ENCODE measurements at regions of chr7 and their contacts with region 1.

Region 1: DNA sequence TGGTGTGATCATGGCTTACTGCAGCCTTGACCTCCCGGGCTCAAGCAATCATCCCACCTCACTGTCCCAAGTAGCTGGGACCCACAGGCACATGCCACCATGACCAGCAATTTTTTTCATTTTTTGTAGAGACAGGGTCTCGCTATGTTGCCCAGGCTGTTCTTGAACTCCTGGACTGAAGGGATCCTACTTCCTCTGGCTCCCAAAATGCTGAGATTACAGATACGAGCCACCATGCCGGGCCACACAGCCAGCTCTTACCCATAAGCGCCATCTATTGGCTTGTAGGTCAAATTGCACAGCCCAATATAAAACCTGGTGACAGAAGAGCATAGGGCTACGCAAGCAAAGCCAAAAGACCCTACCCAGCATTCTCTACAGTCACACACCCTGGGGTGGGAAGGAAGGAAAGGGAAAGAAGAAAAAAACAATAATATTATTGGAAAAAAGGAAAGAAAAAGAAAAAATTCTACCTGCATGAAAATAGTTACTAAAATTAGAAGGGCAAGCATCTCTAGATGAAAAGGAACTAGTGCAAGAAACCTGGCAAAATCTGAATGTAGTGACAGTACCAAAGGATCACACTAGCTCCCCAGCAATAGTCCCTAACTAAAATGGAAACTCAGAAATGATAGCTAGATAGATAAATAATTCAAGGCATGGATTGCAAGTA is 29.4 kb upstream of the AMPH start:
- ATAC-seq: peak in 3 of 8 experiments; percentile 83 to 90 (median 86)
- H3K4me3 ChIP-seq: no peak overlapping the region
- H3K27ac ChIP-seq: no peak overlapping the region
- H3K4me1 ChIP-seq: no peaks in the 10 kb centered on the region

Region 2: DNA sequence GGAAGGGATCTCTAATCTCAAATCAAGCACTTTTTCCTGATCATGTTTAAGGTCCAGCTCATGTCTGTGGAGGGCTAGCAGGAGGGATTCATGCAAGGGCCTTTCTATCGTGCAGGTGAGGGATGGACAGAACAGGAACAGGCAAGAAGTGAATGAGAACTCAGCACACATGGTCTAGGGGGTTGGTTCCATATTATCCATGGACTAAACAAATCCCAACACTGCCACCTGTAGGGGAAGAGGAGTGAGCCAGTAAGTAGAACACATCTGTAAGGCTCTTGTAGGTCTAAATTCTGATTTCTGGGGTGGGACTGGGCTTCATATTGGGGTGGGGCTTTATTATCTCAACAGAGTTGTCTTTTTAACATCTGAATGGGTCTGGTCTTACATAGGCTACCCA is 249.2 kb before region 1 on chr7:
- in situ Hi-C with region 1: loop called in 1 of 9 experiments (anchors 25 kb)
- ATAC-seq: peak in 3 of 8 experiments; percentile 51 to 78 (median 51)
- H3K4me3 ChIP-seq: no peak overlapping the region
- H3K27ac ChIP-seq: no peak overlapping the region
- H3K4me1 ChIP-seq: no peaks in the 10 kb centered on the region

Region 3: DNA sequence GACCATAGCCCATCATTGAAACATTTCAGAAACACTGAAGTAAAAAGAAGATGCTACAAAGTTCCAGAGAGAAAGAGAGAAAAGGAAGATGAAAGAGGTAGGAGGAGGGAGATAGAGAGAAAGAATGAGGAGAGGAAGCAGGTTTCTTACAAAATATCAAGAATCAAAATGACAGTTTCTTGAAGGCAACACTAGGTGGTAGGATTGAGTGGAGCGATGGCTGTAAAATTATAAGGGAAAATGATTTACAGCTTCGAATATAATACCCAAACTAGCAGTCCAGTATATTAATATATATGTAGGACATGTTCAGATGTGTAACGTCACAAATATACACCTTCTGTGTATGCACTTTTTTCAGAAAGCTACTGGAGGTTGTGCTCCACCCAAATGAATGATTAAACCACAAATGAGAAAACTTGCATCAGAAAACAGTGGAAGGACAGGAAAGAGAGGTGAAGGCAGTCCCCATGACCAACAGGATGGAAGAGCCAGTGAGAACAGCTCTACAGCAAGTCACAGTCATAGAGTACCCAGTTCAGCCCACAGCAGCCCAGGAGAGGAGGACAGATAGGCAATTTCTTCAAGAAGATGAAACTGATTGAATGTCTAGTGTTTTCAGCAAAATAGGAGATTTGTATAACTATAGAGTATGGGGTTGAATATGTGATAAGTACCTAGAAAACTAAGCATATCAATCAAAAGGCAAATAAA is 235.7 kb before region 1 on chr7:
- in situ Hi-C with region 1: loop called in 2 of 9 experiments (anchors 25 kb)
- ATAC-seq: no peak
- H3K4me3 ChIP-seq: no peak overlapping the region
- H3K27ac ChIP-seq: no peak overlapping the region
- H3K4me1 ChIP-seq: no peaks in the 10 kb centered on the region

Region 4: DNA sequence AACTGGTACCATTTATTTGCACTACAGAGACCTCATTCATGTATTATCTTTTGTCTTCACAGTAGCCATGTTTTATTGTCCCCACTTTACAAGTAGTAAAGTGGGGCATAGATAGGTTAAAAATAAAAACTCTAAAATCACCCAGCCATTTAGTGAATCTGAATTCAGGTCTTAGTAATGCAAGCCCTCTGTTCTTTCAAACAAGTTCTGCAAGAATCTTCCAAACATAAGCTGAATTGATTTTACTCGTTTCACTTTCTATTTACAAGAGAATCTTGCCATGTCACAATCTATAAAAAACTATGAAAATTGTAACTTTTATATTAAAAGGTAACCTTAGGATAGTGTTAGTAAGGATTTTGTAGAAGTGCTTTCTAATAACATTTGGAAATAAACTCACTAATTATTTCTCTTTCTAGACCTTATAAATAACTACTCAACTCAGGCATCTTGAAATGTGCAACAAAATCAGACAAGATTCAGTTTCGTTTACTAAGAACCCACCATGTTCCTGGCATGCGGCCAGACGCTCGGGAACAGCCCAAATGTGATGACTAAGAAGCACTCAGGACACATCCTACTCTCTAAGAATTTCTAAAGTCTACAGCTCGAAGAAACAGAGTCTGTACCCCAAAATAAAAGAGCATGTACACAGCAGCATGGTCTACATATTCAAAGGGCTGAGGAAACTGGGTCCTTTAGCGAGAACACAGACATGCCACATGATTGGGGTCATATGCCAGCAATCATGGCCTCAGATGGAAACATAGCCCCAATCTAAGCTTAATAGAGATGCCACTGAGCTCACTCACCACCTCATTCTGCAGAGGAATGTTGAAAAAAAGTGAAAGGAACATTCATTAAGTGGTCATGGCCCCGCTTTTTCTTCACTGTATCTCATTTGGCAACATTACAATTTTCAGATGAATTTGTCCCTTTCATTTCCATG is 197.0 kb before region 1 on chr7:
- in situ Hi-C with region 1: loop called in 1 of 9 experiments (anchors 25 kb)
- ATAC-seq: peak in 2 of 8 experiments; percentile 66 to 89
- H3K4me3 ChIP-seq: no peak overlapping the region
- H3K27ac ChIP-seq: no peak overlapping the region
- H3K4me1 ChIP-seq: no peaks in the 10 kb centered on the region

Region 5: DNA sequence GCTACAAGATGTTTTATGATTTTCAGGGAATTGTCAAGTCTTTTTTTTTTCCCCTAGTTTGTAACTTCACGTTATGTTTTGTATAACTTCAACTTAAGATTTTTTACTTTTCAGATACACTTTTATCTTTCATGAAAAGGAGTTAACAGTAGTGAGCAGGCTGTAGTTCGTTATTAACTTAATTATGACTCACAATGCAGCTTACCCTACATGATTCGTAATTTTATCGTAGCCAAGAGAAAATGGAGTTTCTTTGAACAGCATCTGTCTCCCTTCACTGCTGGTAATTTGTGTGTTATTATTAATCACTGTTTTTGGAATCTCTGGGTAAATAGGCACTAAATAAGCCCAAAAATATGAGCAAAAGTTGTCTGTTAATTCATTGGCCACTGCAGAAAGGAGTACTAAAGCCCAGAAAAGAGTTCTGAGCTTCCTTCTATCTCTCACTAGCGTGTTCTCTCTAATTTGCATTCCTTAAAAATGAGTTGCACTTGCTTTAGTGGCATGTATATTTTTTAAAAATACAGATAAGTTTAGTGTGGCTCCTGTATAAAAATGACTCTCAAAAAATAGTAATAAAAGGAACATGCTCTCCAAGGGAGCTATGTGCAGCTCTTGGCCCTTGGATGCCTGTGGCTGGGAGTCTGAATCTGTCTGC is 998.9 kb after region 1 on chr7:
- in situ Hi-C with region 1: no loop called
- ATAC-seq: no peak
- H3K4me3 ChIP-seq: no peak overlapping the region
- H3K27ac ChIP-seq: no peak overlapping the region
- H3K4me1 ChIP-seq: no peaks in the 10 kb centered on the region